WTC11 (cell line): ENCODE measurements at regions of chr12 and their contacts with region 1.

Region 1: DNA sequence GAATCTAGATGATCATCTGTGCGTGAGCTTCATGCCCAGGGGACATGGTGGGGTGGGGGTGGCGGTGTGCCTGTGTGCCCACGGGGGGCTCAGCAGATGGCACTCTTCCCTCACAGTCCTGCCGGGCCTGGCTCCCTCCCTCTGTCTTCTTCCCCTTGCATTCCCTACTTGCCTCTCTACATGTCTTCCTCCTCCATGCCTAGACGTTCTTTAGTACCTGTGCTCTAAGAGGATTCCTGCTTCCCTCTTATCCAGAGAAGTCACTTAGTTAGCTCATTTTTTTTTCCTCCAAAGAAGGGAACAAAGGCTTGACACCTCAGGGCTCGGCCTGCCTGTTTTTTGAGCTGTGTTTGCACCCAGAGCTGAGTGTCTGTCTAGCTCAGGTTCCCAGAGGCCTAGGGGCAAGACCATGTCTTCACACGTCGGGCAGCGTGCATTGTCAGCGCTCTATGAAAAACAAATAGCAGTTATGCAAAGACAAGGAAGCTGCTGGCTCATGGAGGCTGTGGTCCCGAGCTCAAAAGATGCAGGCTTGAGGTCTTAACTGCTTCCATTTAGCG is 48.8 kb downstream of the NINJ2 start:
- DNase-seq: peak; percentile 41
- ATAC-seq: peak; percentile 78
- H3K4me3 Mint-ChIP-seq: no peak overlapping the region
- H3K27ac Mint-ChIP-seq: no peak overlapping the region; the same call in 1 of the 2 replicates
- H3K4me1 Mint-ChIP-seq: peaks cover 9% of the 10 kb centered on the region; the same call in 1 of the 2 replicates
- H3K27me3 Mint-ChIP-seq: no peaks in the 10 kb centered on the region; the same call in 1 of the 2 replicates
- CTCF ChIP-seq: no peak

Region 2: DNA sequence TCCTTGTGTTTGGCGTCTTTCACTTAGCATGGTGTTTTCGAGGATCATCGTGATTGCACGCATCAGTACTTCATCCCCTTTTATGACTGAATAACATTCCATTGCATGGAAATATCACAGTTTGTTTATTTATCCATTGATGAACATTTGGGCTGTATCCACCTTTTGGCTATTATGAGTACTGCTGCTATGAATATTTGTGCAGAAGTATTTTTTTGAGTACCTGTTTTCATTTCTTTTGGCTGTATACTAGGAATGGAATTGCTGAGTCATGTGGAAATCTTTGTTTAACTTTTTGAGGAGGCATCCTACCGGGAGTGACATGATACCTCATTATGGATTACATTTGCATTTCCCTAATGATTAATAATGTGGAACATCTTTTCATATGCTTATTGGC is 204.2 kb after region 1 on chr12:
- CTCF ChIA-PET with region 1: interaction called, 16 read pairs
- POLR2A ChIA-PET with region 1: no interaction called
- DNase-seq: no peak
- ATAC-seq: no peak
- H3K4me3 Mint-ChIP-seq: no peak overlapping the region
- H3K27ac Mint-ChIP-seq: no peak overlapping the region
- H3K4me1 Mint-ChIP-seq: peaks cover 23% of the 10 kb centered on the region
- H3K27me3 Mint-ChIP-seq: no peaks in the 10 kb centered on the region
- CTCF ChIP-seq: no peak